Posterior cingulate gyrus (tissue), 11 donors: ENCODE measurements at regions of chr19 and their contacts with region 1.

Region 1: DNA sequence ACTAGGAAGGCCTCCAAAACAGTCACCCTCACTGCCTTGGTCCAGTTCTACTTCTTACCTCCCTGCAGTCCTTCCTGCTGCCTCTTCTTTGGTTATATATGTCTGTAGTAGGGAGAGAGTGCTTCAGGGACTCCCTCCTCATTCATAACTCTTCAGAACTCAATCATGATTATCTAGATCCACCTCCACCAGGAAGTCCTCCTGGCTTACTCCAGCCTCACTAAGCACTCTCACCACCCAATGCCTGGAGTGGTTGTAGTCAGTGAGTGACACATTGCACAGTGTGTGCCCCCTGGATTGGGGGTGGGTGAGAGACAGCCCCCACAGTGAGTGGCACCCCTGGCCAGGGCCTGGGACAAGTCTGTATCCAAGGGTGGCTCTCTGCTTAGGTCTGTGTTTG is 10.0 kb upstream of the FOSB start:
- DNase-seq: no peak

Region 2: DNA sequence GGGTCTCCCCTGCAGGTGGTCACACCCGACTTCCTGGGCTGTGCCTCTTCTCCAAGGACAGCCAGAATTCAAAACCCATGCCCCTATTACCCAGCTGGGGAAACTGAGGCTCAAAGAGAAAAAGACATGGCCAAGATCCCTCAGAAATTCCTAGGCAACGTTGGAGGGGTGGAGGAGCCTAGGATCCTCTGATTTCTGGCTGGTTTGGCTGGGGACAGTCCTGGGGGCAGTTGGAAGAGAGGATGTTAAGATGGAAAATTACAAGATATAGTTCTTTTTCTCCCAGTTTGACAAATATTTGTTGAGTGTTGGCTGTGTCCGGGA is 51.9 kb after region 1 on chr19:
- intact Hi-C with region 1: loop called (anchors 2 kb)
- DNase-seq: peak in 2 of 10 donors; percentile 32 to 40